A673 (cell line): ENCODE measurements at regions of chr2 and their contacts with region 1.

Region 1: DNA sequence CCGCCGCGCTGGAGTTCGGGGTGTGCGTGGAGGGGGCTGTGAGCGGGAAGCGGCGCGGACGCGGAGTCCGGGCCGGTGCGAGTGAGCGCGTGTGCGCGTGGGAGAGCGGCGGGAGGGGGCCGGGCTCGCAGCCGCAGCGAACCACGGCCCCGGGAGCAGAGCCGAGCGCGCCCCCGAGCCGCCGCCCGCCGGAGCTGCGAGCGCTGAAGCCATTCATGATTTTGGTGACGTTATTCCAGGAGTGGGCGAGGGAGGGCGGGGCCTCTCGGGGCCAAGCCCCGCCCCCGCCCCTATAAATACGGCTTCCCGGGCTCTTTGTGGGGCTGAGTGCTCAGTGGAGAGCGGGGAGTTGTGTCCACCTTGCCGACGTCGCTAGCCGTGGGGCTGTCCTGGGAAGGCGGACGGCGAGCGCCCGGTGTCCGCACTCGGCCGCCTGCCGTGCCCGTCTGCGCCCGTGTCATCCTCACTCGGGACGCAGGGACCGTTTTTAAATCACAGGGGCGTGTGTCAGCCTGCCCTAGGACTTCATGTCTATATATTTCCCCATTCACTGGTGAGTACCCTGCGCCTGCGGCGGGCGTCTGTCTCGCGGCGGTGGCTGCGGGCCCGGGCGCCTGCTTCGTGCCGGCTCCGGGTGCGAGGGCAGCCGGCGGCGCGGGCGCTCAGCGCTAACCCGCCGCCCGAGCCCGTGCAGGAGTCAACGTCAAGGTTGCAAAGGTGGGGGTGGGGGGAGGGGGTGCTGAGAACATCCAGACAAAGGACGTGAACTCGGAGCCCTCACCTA is at the start of gene LBH:
- DNase-seq: peak; percentile 92
- H3K4me3 ChIP-seq: peak within 1 kb of the TSS; percentile 81
- H3K27ac ChIP-seq: peak within 1 kb of the TSS; percentile 85
- H3K4me1 ChIP-seq: peaks cover 14% of the 10 kb centered on the region
- H3K27me3 ChIP-seq: no peaks in the 10 kb centered on the region
- CTCF ChIP-seq: no peak
- total RNA-seq, gene LBH: 114 and 140 TPM in 2 replicates

Region 2: GRCh38 chr2:29480426-29480825 is 751.0 kb before region 1 on chr2:
- CTCF ChIA-PET with region 1: no interaction called
- POLR2A ChIA-PET with region 1: no interaction called
- intact Hi-C with region 1: no loop called
- DNase-seq: no peak
- H3K4me3 ChIP-seq: no peak overlapping the region
- H3K27ac ChIP-seq: no peak overlapping the region
- H3K4me1 ChIP-seq: no peaks in the 10 kb centered on the region
- H3K27me3 ChIP-seq: no peaks in the 10 kb centered on the region
- CTCF ChIP-seq: no peak

Region 3: DNA sequence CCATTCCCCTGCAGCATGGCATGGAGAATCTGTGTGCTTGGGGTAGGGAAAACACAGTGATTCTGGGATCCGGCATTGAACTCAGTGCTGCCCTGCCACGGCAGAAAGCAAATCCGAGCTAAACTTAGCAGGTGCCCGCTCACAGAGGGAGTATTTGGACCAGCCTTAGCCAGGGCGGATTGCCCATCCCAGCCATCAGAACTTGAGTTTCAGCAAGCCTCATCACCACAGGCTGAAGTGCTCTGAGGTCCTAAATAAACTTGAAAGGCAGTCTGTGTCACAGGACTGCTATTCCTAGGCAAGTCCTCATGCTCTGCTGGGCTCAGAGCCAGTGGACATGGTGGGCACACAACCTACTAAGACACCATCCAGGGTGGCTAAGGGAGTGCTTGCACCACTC is 170.8 kb before region 1 on chr2:
- CTCF ChIA-PET with region 1: no interaction called
- POLR2A ChIA-PET with region 1: no interaction called
- intact Hi-C with region 1: no loop called
- DNase-seq: no peak
- H3K4me3 ChIP-seq: no peak overlapping the region
- H3K27ac ChIP-seq: no peak overlapping the region
- H3K4me1 ChIP-seq: no peaks in the 10 kb centered on the region
- H3K27me3 ChIP-seq: no peaks in the 10 kb centered on the region
- CTCF ChIP-seq: no peak

Region 4: DNA sequence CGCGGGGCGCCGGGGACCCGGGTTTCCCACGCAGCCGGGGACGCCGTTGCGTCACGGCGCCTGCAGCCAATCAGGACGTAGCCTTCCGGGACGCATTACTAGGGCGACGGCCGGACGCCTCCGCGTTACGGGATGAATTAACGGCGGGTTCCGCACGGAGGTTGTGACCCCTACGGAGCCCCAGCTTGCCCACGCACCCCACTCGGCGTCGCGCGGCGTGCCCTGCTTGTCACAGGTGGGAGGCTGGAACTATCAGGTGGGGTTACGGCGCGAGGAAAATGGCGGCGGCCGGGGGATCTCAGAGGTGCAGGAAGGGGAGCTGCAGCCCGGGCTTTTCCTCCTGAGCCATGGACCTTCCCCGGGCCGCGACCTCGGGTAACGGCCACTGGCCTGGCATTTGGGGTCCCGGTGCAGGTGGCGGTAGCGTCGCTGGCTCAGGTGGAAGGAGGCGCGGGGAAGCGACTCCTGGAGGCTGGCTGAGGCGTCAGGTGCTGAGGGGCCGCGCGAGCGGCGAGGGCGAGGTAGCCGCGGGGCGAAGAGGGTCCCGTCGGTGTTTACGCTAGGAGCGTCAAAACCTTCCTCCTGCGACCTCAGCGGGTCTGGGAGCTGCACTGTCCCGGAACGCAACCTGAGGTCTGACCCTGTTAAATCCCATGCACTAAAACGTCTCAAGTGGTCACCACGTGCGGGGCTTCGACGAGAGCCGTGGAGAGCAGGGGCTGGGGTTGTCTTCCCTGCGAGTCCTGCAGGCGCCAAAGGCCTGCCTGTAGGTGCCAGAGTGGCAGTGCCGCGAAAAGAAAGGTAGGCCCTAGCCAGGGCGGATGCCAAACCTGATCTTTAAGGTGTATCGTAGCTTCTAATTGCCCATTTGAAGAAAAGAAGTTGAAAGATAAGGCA is 216.0 kb after region 1 on chr2 and contains the start of gene LCLAT1:
- CTCF ChIA-PET with region 1: no interaction called
- POLR2A ChIA-PET with region 1: no interaction called
- intact Hi-C with region 1: loop called (anchors 10 kb)
- DNase-seq: peak; percentile 86
- H3K4me3 ChIP-seq: peak within 1 kb of the TSS; percentile 59
- H3K27ac ChIP-seq: peak within 1 kb of the TSS; percentile 80
- H3K4me1 ChIP-seq: peaks cover 11% of the 10 kb centered on the region
- H3K27me3 ChIP-seq: no peaks in the 10 kb centered on the region
- CTCF ChIP-seq: peak; percentile 22; the same call in 1 of the 2 replicates
- total RNA-seq, gene LCLAT1: 31.7 and 35.3 TPM in 2 replicates